Heart right ventricle (tissue), 16 donors: ENCODE measurements at regions of chr16 and their contacts with region 1.

Region 1: DNA sequence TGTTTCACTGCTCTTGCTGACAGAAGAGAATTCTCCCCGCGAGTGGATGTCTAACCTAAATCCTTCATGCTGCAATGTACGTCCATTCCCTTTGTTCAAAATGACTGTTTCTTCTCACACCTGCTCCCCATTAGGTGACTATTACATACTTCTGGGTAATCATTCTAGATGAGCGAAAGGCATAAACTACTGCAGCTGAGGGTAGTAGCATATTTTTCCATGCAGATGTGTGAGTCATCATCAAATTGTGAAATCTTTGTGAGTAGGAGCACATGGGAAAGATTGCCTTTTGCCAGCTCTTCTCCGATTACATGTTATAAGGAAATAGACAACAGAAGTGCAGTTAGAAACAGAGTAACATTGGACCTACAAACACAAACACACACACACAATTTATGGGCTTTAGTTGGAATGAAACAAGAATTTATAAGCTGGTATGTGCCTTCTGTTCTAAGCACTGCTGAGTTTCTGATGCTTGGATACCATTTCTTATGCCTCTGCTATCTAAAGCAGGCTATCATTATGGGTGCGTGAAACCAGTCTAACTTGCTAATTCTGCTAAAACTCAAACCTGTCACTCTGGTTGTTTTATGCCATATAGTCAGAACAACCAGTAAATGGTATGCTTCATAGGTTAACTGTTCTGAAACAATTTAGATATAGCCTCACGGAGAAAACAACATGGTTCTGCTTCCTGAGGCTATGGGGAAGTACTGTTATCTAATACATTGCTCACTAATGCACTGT is 346.9 kb upstream of the PSMD7 start:
- DNase-seq: peak in 1 of 2 donors; percentile 7
- ATAC-seq: peak in 7 of 8 donors; percentile 52 to 85 (median 68)
- H3K4me3 ChIP-seq: no peak overlapping the region
- H3K27ac ChIP-seq: peak overlapping the region in 4 of 10 donors; percentile 21 to 62 (median 48)
- H3K4me1 ChIP-seq: peaks cover 0 to 14% (median 0%) of the 10 kb centered on the region in 9 donors
- H3K27me3 ChIP-seq: peaks cover 0 to 5% (median 0%) of the 10 kb centered on the region in 7 donors
- CTCF ChIP-seq: no peak

Region 2: GRCh38 chr16:73636196-73636595 is 313.6 kb before region 1 on chr16:
- intact Hi-C with region 1: no loop called
- DNase-seq: no peak
- ATAC-seq: no peak
- H3K4me3 ChIP-seq: no peak overlapping the region
- H3K27ac ChIP-seq: no peak overlapping the region
- H3K4me1 ChIP-seq: peaks cover 0 to 7% (median 0%) of the 10 kb centered on the region in 9 donors
- H3K27me3 ChIP-seq: no peaks in the 10 kb centered on the region
- CTCF ChIP-seq: no peak

Region 3: GRCh38 chr16:73916829-73917594 is 32.7 kb before region 1 on chr16:
- intact Hi-C with region 1: loop called in 1 of 10 experiments (anchors 2 kb)
- DNase-seq: no peak
- ATAC-seq: peak in 7 of 8 donors; percentile 52 to 95 (median 77)
- H3K4me3 ChIP-seq: no peak overlapping the region
- H3K27ac ChIP-seq: peak overlapping the region in 2 of 10 donors; percentile 7 to 21
- H3K4me1 ChIP-seq: no peaks in the 10 kb centered on the region
- H3K27me3 ChIP-seq: peaks cover 0 to 16% (median 0%) of the 10 kb centered on the region in 7 donors
- CTCF ChIP-seq: no peak

Region 4: DNA sequence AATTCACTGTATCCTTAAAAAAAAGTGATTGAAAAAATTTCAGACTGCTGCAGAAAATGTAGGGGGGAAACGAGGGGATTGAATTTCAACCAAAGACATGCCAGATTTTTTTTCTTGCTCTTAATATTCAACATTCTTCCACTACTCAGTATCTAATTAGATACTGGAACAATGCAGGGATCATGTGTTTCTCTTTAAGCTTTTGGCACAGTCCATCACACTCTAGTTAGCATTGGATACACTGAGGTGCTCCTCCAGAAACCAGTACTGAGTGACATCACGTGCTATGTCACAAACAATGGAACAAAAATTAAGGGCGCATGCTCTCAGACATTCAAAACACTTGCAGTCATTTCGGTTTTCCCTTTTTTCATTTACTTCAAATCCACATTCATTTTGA is 48.2 kb after region 1 on chr16:
- intact Hi-C with region 1: no loop called
- DNase-seq: no peak
- ATAC-seq: no peak
- H3K4me3 ChIP-seq: no peak overlapping the region
- H3K27ac ChIP-seq: no peak overlapping the region
- H3K4me1 ChIP-seq: no peaks in the 10 kb centered on the region
- H3K27me3 ChIP-seq: no peaks in the 10 kb centered on the region
- CTCF ChIP-seq: no peak

Region 5: DNA sequence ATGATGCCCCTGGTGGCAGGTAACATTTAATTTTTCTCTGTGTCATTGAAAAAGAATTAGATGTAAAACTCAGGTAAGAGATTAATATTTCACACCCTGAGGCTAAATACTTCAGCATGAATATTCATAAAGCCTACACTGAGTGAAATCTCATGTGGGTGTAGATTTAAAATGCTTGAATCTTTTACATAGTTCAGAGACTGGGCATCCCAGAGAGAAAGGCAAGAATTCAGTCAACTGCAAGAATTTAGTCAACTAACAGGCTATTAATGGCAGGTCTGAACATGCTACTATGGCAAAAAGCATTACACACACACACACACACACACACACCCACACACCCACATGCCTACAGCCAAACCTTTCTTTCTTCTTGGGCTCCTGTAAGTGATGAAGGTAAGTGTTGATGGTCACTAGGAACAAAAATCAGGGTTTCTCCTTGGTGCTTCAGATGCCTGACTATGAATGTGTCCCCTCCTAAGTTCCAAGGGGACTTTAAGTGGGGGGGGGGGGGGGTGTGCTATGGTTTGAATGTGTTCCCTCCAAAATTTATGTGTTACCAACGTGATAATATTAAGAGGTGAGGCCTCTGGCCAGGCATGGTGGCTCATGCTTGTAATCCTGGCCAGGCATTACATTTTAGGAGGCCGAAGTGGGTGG is 283.2 kb after region 1 on chr16:
- intact Hi-C with region 1: no loop called
- DNase-seq: no peak
- ATAC-seq: no peak
- H3K4me3 ChIP-seq: no peak overlapping the region
- H3K27ac ChIP-seq: no peak overlapping the region
- H3K4me1 ChIP-seq: no peaks in the 10 kb centered on the region
- H3K27me3 ChIP-seq: peaks cover 0 to 4% (median 0%) of the 10 kb centered on the region in 7 donors
- CTCF ChIP-seq: no peak